ENCODE measurements at regions of chr2 and their contacts with region 1.

Region 1: GRCh38 chr2:11784747-11785610 is 38.5 kb downstream of the LPIN1 start:
- DNase-seq: peak; percentile 13 to 53 (median 32)
- H3K4me3 ChIP-seq: no peak overlapping the region
- H3K4me3 Mint-ChIP-seq: no peak overlapping the region
- H3K27ac ChIP-seq: no peak overlapping the region
- H3K27ac Mint-ChIP-seq: no peak overlapping the region
- H3K4me1 ChIP-seq: no peaks in the 10 kb centered on the region
- H3K4me1 Mint-ChIP-seq: peaks cover 0 to 13% (median 0%) of the 10 kb centered on the region in 3 donors
- H3K27me3 ChIP-seq: no peaks in the 10 kb centered on the region
- H3K27me3 Mint-ChIP-seq: no peaks in the 10 kb centered on the region

Region 2: GRCh38 chr2:10369269-10370255 is 1415.4 kb before region 1 on chr2:
- CTCF ChIA-PET with region 1: no interaction called
- POLR2A ChIA-PET with region 1: no interaction called
- DNase-seq: no peak
- H3K4me3 ChIP-seq: no peak overlapping the region
- H3K4me3 Mint-ChIP-seq: no peak overlapping the region
- H3K27ac ChIP-seq: peak overlapping the region; percentile 24
- H3K27ac Mint-ChIP-seq: peak overlapping the region in 3 of 8 donors; percentile 47 to 66 (median 65)
- H3K4me1 ChIP-seq: peaks cover 12% of the 10 kb centered on the region
- H3K4me1 Mint-ChIP-seq: peaks cover 31 to 79% (median 37%) of the 10 kb centered on the region in 3 donors
- H3K27me3 ChIP-seq: no peaks in the 10 kb centered on the region
- H3K27me3 Mint-ChIP-seq: no peaks in the 10 kb centered on the region

Region 3: DNA sequence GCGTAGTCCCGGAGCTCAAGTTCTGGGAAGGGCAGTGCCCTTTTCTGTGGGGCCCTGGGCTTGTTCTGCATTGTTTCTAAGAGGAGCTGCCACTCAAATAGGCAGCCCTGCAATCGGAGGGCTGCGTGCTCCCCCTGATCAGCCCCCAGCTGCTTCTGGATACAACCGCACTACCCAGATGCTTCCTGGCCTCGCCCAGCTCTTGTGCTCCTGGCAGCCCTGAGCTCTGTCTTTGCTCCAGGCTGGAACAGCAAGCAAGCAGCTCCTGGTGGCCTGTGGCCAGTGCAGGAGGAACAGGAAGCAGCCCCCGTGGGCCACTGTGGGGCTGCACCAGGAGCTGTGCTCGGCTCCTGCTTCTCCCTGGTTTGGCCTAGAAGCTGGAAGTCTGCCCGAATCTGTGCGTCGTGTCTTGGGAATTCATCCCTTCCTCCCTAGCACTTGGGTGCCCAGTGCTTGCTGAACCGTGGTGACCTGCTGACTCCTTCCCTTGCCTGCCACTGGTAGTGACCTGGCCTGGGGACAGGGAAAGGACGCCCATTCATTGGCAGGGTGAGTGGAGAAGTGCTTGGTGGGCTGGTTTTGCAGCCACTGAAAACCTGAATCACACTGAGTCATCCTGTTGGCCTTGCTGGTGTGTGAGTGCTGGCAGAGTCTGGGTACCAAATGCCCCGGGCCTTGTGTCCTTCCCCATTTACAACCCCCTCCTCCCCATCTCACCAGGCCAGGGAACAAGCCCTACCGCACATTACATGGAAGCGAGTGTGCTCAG is 87.7 kb before region 1 on chr2:
- CTCF ChIA-PET with region 1: interaction called, 99 read pairs
- POLR2A ChIA-PET with region 1: no interaction called
- DNase-seq: no peak
- H3K4me3 ChIP-seq: no peak overlapping the region
- H3K4me3 Mint-ChIP-seq: no peak overlapping the region
- H3K27ac ChIP-seq: no peak overlapping the region
- H3K27ac Mint-ChIP-seq: no peak overlapping the region
- H3K4me1 ChIP-seq: no peaks in the 10 kb centered on the region
- H3K4me1 Mint-ChIP-seq: peaks cover 2 to 5% (median 4%) of the 10 kb centered on the region in 3 donors
- H3K27me3 ChIP-seq: no peaks in the 10 kb centered on the region
- H3K27me3 Mint-ChIP-seq: no peaks in the 10 kb centered on the region

Region 4: DNA sequence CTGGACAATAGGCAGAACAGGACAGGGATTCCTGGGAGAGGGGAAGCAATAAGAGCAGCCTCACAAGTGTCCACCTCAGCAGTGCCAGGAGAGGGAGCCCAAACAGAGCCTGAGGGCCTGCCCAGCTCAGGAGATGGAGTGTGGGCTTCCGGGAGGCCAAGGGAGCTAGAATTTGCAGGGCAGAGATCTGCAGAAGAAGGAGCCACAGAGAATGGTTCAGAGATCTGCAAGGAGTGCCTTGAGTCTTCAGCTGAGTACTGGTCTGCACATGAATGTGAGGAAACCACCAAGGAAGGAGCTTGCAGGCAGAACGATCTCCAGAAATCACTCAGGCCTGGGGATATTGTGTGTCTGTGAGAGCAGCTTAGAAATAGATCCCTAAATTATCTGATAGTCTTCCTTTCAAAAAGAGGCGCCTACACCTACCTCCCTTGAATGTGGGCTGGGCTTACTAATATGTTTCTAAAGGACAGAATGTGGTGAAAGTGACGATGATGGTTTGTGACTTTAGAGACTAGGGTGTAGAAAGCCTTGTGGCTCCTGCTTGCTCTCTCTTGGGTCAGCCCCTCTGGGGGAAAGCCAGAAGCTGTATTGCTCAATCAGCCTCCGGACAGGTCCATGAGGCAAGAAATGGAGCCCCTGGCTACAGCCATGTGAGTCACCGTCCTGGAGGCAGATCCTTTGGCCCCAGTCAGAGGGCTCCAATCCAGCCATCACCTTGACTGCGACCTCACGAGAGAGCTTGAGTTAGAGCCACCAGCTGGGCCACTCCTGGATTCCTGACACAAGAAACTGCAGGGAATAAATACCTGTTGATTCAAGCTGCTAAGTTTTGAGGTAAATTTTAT is 46.2 kb before region 1 on chr2:
- CTCF ChIA-PET with region 1: interaction called, 70 read pairs
- POLR2A ChIA-PET with region 1: no interaction called
- DNase-seq: peak in 3 of 5 donors; percentile 12 to 63 (median 14)
- H3K4me3 ChIP-seq: no peak overlapping the region
- H3K4me3 Mint-ChIP-seq: no peak overlapping the region
- H3K27ac ChIP-seq: no peak overlapping the region
- H3K27ac Mint-ChIP-seq: peak overlapping the region in 3 of 8 donors; percentile 23 to 44 (median 33)
- H3K4me1 ChIP-seq: peaks cover 5% of the 10 kb centered on the region
- H3K4me1 Mint-ChIP-seq: peaks cover 8 to 13% (median 9%) of the 10 kb centered on the region in 3 donors
- H3K27me3 ChIP-seq: no peaks in the 10 kb centered on the region
- H3K27me3 Mint-ChIP-seq: peaks cover 1 to 9% of the 10 kb centered on the region in 2 donors

Region 5: GRCh38 chr2:11813951-11814350 is 29.0 kb after region 1 on chr2:
- CTCF ChIA-PET with region 1: no interaction called
- POLR2A ChIA-PET with region 1: no interaction called
- DNase-seq: no peak
- H3K4me3 ChIP-seq: no peak overlapping the region
- H3K4me3 Mint-ChIP-seq: no peak overlapping the region
- H3K27ac ChIP-seq: no peak overlapping the region
- H3K27ac Mint-ChIP-seq: peak overlapping the region in 4 of 8 donors; percentile 4 to 69 (median 42)
- H3K4me1 ChIP-seq: no peaks in the 10 kb centered on the region
- H3K4me1 Mint-ChIP-seq: peaks cover 0 to 8% (median 4%) of the 10 kb centered on the region in 3 donors
- H3K27me3 ChIP-seq: no peaks in the 10 kb centered on the region
- H3K27me3 Mint-ChIP-seq: no peaks in the 10 kb centered on the region